WTC11 (cell line): ENCODE measurements at regions of chr2 and their contacts with region 1.

Region 1: DNA sequence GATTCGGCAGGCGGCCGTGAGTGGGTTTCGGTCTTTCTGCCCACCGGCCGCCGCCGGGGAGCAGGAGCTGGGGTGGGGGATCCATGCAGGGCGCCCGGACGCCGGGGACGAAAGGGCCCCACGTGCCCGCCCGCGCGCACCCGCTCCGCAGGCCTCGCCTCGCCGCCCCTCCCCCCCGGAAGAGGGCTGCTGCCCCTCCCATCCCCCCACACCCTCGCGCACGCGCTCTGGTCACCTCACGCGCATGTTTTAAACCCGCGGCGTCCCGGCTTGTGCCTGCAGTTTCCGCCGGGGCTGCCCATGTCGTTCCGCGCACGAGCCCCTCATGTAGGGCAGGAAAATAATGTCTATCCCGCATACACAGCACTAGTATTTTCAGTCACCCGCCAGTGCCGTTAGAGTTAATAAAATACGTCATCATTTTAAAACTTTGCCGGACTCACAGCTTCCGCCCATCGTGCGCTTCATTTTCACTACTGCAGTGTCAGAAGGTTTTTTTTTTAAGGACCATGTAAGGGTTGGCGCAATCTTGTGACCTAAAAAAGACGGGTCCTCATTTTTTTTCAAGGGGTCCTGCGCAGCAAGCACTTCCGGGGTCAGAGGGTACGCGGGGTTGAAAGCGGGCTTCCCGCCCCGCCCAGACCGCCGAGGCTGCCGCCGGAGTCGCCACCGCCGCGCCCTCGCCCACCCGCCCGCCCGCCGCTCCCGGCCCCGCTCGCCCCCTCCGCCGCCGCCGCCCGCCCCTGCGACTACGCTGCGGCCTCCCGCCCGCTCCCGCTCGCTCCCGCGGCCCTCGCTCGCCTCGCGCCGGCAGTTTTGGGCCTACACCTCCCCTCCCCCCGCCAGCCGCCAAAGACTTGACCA is at the start of gene PCBP1:
- DNase-seq: peak; percentile 89
- ATAC-seq: peak; percentile 15
- H3K4me3 Mint-ChIP-seq: peak within 1 kb of the TSS; percentile 97
- H3K27ac Mint-ChIP-seq: peak within 1 kb of the TSS; percentile 100
- H3K4me1 Mint-ChIP-seq: peaks cover 44% of the 10 kb centered on the region
- H3K27me3 Mint-ChIP-seq: no peaks in the 10 kb centered on the region; the same call in 1 of the 2 replicates
- CTCF ChIP-seq: no peak
- total RNA-seq, gene PCBP1: 489 to 528 TPM (median 518 TPM) in 3 replicates

Region 2: DNA sequence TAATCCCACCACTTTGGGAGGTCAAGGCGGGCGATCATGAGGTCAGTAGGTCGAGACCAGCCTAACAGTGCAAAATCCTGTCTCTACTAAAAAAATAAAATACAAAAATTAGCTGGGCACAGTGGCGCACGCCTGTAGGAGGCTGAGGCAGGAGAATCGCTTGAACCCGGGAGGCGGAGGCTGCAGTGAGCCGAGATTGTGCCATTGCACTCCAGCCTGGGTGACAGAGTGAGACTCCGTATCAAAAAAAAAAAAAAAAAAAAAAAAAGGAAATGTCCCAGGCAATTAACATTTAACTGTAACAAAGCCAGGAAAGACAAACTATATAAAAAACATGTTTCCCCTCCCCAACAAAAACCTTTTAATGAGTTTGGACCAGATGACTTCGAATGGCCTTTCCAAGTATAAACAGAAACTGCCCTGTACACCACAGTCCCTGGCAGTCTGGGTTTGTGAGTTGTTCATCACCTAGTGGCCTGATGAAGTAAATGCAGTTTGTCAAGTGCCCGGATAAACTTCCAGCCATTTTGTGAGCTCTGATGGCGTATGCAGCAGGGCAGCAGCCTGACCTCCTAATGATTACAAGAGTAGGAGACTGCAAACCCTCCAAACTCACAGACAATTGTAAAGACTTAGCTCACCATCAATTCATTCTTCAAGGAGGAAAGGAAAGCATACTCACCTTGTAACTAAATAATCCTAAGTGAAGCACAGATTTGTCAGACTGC is 16.4 kb before region 1 on chr2:
- CTCF ChIA-PET with region 1: interaction called, 16 read pairs
- POLR2A ChIA-PET with region 1: interaction called, 8 read pairs
- DNase-seq: peak; percentile 47
- ATAC-seq: peak; percentile 97
- H3K4me3 Mint-ChIP-seq: no peak overlapping the region
- H3K27ac Mint-ChIP-seq: peak overlapping the region; percentile 100
- H3K4me1 Mint-ChIP-seq: peaks cover 4% of the 10 kb centered on the region
- H3K27me3 Mint-ChIP-seq: no peaks in the 10 kb centered on the region
- CTCF ChIP-seq: peak; percentile 53

Region 3: DNA sequence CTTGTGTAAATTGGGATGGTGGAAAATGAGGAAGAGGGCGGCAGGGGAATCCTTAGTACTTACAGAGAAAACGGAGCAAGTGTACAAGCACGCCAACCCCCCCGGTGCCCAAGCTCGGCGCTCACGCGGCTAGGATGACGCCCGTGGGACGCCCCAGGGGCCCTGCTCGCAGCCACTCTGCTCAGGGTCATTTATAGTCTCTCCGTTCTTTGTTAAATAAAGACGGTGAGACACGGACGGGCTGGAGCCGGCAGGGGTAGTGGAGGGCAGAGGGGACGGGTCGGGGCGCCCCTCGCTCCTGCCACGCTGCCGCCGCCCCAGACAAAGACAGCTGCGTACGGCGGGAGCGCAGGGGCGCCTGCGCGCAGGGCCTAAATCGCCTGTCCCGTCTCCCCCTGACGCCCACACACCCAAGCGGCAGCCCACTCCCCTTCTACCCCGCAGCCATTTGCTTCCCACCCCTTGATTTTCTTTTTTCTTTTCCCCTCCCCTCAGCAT is 38.0 kb after region 1 on chr2:
- CTCF ChIA-PET with region 1: interaction called, 11 read pairs
- POLR2A ChIA-PET with region 1: interaction called, 49 read pairs
- DNase-seq: peak; percentile 61
- ATAC-seq: peak; percentile 49
- H3K4me3 Mint-ChIP-seq: peak overlapping the region; percentile 97
- H3K27ac Mint-ChIP-seq: peak overlapping the region; percentile 100
- H3K4me1 Mint-ChIP-seq: peaks cover 51% of the 10 kb centered on the region
- H3K27me3 Mint-ChIP-seq: no peaks in the 10 kb centered on the region; the same call in 1 of the 2 replicates
- CTCF ChIP-seq: no peak

Region 4: DNA sequence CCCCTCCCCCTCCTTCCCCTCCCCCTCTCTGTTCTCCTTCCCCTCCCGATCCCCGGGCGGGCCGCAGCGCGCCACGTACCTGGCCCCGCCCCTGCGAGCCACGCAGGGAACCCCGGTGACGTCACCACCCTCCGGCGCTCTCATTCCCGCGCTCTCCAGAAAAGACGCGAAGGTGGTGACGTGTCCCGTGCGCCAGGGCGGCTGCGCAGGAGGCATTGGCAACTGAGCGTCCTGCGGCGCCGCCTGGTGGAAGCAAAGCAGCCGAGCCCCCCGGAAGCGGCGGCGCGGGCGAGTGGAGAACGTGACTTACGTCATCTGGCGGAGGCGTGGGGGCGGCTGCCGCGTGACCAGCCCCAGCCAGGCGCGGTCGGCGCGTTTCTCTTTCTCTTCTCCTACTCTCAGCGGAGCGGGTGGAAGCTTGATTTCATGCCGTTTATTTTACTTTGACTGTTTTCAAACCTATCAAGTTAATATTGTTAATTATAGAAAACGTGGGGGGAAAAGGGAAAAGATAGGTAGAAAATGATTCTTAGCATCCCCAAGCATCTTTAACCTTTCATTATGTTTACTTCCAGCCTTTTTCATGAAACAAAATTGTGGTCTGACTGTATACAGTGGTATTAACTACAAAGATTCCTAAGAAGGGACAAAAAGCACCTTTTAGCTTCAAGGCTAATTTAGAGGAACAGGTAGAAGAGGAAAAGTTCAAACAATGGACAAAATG is 55.7 kb after region 1 on chr2:
- CTCF ChIA-PET with region 1: interaction called, 7 read pairs
- POLR2A ChIA-PET with region 1: interaction called, 59 read pairs
- DNase-seq: peak; percentile 99
- ATAC-seq: peak; percentile 71
- H3K4me3 Mint-ChIP-seq: peak overlapping the region; percentile 63
- H3K27ac Mint-ChIP-seq: peak overlapping the region; percentile 98
- H3K4me1 Mint-ChIP-seq: peaks cover 37% of the 10 kb centered on the region
- H3K27me3 Mint-ChIP-seq: no peaks in the 10 kb centered on the region
- CTCF ChIP-seq: peak; percentile 77

Region 5: DNA sequence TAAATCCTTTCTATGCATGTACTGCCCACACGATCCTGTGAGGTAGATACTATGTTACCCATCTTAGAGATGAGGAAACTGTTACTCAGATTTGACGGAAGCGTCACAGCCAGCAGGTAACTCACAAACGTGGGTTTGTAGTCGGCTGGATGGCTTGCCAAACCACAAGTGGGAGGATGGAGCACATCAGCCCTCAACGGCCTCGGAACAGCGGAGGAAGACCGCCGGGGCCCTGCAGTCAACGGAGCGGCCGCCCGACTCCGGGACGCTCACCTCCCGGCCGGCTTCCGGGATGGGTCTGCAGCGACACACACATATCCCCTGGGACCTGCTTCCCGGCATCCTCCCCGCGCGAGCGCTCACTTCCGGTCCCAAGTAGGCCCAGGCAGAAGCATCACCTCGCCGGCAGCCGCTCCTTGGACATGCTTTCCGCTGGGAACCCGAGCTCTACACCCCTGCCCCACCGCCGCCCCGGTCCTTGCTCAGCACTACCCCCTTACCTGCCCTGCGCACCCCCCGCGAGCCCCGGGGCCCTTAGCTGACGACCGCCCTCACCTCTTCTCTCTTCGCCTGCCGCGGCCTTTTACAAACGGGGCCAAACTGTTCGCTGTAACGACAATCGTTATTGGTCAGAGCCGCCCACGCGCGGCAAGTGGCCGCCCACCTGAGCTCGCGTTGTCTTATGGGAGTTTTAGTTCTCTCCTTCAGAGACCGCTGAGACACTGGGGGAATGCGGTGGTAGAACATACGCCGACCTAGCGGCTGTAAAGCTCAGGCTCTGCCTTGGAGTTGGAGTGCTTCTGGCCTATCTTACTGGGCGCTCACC is 103.6 kb after region 1 on chr2 and contains the start of gene C2orf42:
- CTCF ChIA-PET with region 1: no interaction called
- POLR2A ChIA-PET with region 1: interaction called, 13 read pairs
- DNase-seq: peak; percentile 88
- ATAC-seq: peak; percentile 90
- H3K4me3 Mint-ChIP-seq: peak within 1 kb of the TSS; percentile 85
- H3K27ac Mint-ChIP-seq: peak within 1 kb of the TSS; percentile 97
- H3K4me1 Mint-ChIP-seq: peaks cover 14% of the 10 kb centered on the region
- H3K27me3 Mint-ChIP-seq: no peaks in the 10 kb centered on the region; the same call in 1 of the 2 replicates
- CTCF ChIP-seq: no peak
- total RNA-seq, gene C2orf42: 6.8 to 13.1 TPM (median 10.2 TPM) in 3 replicates

Region 6: DNA sequence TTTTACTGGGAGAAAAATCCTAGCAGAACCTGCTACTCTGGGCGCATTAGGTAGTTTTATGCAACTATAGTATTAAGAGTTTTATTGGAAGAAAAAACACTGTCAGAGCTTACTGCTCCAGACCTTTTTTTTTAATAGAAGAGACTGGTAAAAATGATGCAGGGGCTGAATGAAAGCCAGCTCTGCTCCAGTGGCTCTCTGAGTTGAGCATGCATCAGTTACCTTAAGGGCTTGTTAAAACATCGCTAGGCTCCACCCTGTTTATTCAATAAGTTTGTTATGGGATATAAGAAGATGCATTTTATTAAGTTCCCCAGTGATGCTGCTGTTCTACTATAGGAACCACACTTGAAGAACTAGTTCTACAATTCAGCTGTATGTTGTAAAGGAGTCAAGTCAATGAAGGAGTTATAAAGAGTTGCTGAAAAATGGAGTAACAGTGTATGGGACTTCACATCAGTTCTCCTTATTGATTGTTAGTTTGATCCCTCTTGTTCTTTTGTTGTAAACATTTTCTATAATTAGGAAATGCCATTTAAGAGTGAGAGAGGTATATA is 193.2 kb after region 1 on chr2:
- CTCF ChIA-PET with region 1: no interaction called
- POLR2A ChIA-PET with region 1: no interaction called
- DNase-seq: no peak
- ATAC-seq: no peak
- H3K4me3 Mint-ChIP-seq: no peak overlapping the region
- H3K27ac Mint-ChIP-seq: no peak overlapping the region
- H3K4me1 Mint-ChIP-seq: no peaks in the 10 kb centered on the region
- H3K27me3 Mint-ChIP-seq: no peaks in the 10 kb centered on the region
- CTCF ChIP-seq: no peak